Aorta (tissue), 5 donors: ENCODE measurements at regions of chr1 and their contacts with region 1.

Region 1: GRCh38 chr1:27556781-27557595 is 47.0 kb downstream of the AHDC1 start:
- DNase-seq: peak; percentile 98
- ATAC-seq: peak; percentile 82
- H3K4me3 ChIP-seq: no peak overlapping the region
- H3K27ac ChIP-seq: peak overlapping the region in 1 of 2 donors; percentile 48
- H3K4me1 ChIP-seq: peaks cover 0 to 4% of the 10 kb centered on the region in 2 donors
- H3K27me3 ChIP-seq: no peaks in the 10 kb centered on the region

Region 2: DNA sequence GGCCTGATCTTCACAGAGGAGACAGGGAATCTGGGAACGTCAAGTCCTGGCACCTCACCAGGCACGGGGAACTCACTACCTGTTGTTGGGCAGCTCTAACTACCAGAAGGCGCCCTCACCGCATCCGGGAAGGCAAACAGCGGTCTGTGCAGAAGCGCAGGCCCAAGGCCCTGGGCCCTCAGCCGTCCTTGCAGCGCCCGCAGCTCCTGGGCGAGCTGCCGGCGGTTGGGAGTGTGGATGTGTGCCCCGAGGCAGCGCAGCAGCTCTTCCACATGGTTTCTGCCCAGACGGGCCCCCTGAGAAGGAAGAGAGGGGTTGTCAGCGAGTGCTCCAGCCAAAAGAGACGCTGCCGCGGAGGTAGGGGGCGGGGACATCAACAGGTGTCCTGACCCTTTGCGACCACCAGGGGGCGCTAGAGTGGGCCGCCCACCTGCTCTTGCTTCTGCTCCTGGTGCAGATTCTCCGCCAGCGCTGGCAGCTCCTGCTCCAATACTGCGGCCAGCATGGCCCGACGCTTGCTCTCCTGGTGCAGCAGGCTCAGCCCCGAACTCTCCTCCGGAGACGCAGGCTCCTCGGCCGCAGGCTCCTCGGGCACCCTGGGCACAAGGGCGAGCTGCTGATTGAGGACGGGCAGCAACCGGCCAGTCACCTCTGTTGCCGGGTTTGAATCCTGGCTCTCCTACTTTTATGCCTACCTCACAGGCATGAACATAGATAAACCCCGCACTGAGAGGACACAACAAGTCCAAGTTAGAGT is 199.5 kb before region 1 on chr1:
- intact Hi-C with region 1: no loop called
- DNase-seq: peak; percentile 80 to 92
- ATAC-seq: peak; percentile 85
- H3K4me3 ChIP-seq: no peak overlapping the region
- H3K27ac ChIP-seq: no peak overlapping the region
- H3K4me1 ChIP-seq: no peaks in the 10 kb centered on the region
- H3K27me3 ChIP-seq: no peaks in the 10 kb centered on the region

Region 3: DNA sequence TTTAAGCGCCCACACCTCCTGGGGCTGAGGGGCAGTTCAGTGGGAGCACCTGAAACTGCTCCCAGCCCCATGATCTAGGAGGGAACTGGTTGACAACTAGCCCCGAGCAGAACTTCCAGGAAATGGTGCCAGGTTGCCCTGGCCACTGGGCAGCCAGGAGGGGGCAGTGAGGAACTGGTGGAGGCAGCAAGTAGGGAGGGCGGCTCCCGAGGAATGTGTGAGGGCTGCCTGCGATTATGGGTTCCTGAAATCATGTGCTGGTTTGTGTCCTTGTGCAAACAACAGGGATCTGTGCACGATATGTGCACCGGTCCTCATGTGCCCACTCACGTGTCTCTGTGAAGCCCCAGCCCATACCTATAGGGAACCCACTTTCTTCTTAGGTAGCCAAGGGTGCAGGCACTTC is 154.6 kb before region 1 on chr1:
- intact Hi-C with region 1: loop called in 1 of 2 experiments (anchors 5 kb)
- DNase-seq: peak; percentile 87 to 92
- ATAC-seq: peak; percentile 74
- H3K4me3 ChIP-seq: no peak overlapping the region
- H3K27ac ChIP-seq: peak overlapping the region; percentile 49 to 71
- H3K4me1 ChIP-seq: no peaks in the 10 kb centered on the region
- H3K27me3 ChIP-seq: no peaks in the 10 kb centered on the region

Region 4: GRCh38 chr1:27416387-27417111 is 140.4 kb before region 1 on chr1:
- intact Hi-C with region 1: loop called in 1 of 2 experiments (anchors 5 kb)
- DNase-seq: no peak
- ATAC-seq: no peak
- H3K4me3 ChIP-seq: no peak overlapping the region
- H3K27ac ChIP-seq: no peak overlapping the region
- H3K4me1 ChIP-seq: no peaks in the 10 kb centered on the region
- H3K27me3 ChIP-seq: no peaks in the 10 kb centered on the region

Region 5: DNA sequence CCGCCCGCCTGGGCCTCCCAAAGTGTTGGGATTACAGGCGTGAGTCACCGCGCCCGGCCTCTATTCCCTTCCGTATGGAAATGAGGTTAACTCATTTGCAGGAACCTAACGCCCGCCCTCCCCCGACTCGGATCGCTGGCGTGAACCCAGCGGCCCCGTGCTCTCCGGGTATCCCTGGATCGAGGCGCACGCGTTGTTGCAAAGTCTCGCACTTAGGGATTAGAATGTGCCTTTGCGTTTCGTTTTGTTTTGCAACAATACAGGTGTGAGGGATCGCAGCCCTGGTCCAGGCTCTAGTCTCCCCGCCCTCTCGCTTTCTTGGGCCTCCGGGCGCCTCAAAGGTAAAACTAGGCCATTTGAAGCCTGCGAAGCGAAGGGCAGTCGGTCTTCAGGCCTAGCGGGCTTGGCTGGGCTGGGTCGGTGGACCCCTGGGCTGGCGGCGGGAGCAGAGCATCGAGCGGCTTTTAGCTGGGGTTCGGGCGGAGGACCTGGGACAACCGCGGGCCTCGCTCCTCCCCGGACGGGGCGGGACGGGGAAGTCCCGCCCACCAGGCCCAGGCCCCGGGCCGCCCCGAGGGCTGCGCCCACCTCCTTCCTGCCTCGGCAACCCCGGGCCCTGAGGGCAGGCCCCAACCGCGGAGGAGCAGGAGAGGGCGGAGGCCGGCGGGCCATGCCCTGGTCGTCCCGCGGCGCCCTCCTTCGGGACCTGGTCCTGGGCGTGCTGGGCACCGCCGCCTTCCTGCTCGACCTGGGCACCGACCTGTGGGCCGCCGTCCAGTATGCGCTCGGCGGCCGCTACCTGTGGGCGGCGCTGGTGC is 402.6 kb after region 1 on chr1 and contains the start of gene XKR8:
- intact Hi-C with region 1: no loop called
- DNase-seq: peak; percentile 90 to 92
- ATAC-seq: peak; percentile 94
- H3K4me3 ChIP-seq: peak within 1 kb of the TSS; percentile 27 to 67
- H3K27ac ChIP-seq: peak within 1 kb of the TSS; percentile 31 to 81
- H3K4me1 ChIP-seq: no peaks in the 10 kb centered on the region
- H3K27me3 ChIP-seq: no peaks in the 10 kb centered on the region
- total RNA-seq, gene XKR8: 6.8 to 7.8 TPM